T-cell (primary cell): ENCODE measurements at regions of chr3 and their contacts with region 1.

Region 1: DNA sequence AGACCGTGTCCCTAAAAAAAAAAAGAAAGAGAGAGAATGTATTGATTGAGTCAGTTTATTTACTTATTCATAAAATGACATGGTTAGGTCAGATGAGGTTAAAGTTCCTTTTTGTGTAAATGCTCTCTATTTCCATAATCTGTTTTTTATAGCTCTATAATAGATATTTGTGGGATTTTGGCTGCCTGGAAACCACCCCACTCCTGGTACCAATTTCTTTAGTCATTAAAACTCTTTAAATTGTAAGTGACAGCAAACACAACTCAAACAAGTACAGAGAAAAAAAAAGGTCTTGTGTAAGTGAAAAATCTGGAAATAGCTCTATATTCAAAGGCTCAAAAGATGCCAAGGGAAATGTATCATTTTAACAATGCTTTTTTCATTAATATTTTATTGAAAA is 11.0 kb upstream of the PPP4R2 start:
- DNase-seq: no peak
- ATAC-seq: no peak
- H3K4me3 ChIP-seq: no peak overlapping the region
- H3K4me3 Mint-ChIP-seq: no peak overlapping the region
- H3K27ac ChIP-seq: no peak overlapping the region
- H3K27ac Mint-ChIP-seq: no peak overlapping the region
- H3K4me1 ChIP-seq: no peaks in the 10 kb centered on the region
- H3K4me1 Mint-ChIP-seq: no peaks in the 10 kb centered on the region
- H3K27me3 ChIP-seq: peaks cover 0 to 9% of the 10 kb centered on the region in 2 experiments
- H3K27me3 Mint-ChIP-seq: peaks cover 0 to 9% of the 10 kb centered on the region in 2 donors

Region 2: GRCh38 chr3:72938471-72939265 is 46.9 kb before region 1 on chr3:
- CTCF ChIA-PET with region 1: interaction called in 1 of 2 experiments, 15 read pairs
- POLR2A ChIA-PET with region 1: interaction called in 1 of 2 experiments, 9 read pairs
- DNase-seq: peak in 31 of 35 experiments; percentile 3 to 69 (median 14)
- ATAC-seq: peak; percentile 81 to 100 (median 89)
- H3K4me3 ChIP-seq: no peak overlapping the region
- H3K4me3 Mint-ChIP-seq: no peak overlapping the region
- H3K27ac ChIP-seq: no peak overlapping the region
- H3K27ac Mint-ChIP-seq: no peak overlapping the region
- H3K4me1 ChIP-seq: no peaks in the 10 kb centered on the region
- H3K4me1 Mint-ChIP-seq: peaks cover 0 to 2% (median 0%) of the 10 kb centered on the region in 3 donors
- H3K27me3 ChIP-seq: peaks cover 0 to under 1% of the 10 kb centered on the region in 2 experiments
- H3K27me3 Mint-ChIP-seq: peaks cover 0 to 7% of the 10 kb centered on the region in 2 donors